KBM-7 (cell line): ENCODE measurements at regions of chr1 and their contacts with region 1.

Region 1: GRCh38 chr1:45303582-45304310 is 22.9 kb upstream of the HPDL start:
- DNase-seq: peak; percentile 94

Region 2: GRCh38 chr1:44799770-44800584 is 503.8 kb before region 1 on chr1 and contains the start of gene PLK3:
- in situ Hi-C with region 1: loop called (anchors 25 kb)
- DNase-seq: peak; percentile 98

Region 3: GRCh38 chr1:45011837-45012638 is 291.7 kb before region 1 on chr1 and contains the start of gene UROD:
- in situ Hi-C with region 1: loop called (anchors 10 kb)
- DNase-seq: peak; percentile 98

Region 4: GRCh38 chr1:45116340-45116739 is 187.4 kb before region 1 on chr1:
- in situ Hi-C with region 1: no loop called
- DNase-seq: no peak